Activated CD4-positive, alpha-beta T cell treated with anti-CD3 and anti-CD28 coated beads for 36 hours (primary cell): ENCODE measurements at regions of chr15 and their contacts with region 1.

Region 1: DNA sequence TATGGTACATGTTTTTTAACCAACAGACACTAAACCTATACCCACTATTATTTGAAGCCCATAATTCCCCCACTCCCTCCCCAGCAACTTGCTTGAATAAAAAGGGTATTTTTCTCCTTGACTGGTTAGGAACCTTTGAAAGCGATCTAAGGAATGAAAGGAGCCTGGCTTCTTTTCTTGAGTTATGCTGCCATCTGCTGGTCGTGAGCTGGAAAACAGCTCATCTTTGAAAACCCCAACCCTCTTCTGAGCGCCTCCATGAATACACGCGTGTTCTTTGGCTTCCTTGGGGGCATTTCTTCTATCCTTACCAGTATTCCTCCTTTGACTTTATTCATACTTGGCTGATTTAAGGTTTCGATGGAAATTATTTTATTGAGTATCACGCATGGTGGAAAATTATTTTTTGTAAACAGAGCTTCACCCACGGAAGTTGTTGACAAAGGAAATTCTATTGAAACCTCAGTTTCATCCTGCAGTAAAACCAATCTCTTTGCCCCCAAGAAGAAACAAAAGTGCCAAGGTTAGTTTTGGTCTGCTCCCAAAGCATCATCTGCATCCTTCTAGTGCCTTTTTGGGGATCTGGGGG is 171.6 kb downstream of the SV2B start:
- DNase-seq: peak; percentile 74
- ATAC-seq: peak; percentile 64
- H3K4me3 Mint-ChIP-seq: no peak overlapping the region
- H3K27ac Mint-ChIP-seq: no peak overlapping the region
- H3K4me1 Mint-ChIP-seq: peaks cover 2% of the 10 kb centered on the region
- H3K27me3 Mint-ChIP-seq: peaks cover 12% of the 10 kb centered on the region

Region 2: DNA sequence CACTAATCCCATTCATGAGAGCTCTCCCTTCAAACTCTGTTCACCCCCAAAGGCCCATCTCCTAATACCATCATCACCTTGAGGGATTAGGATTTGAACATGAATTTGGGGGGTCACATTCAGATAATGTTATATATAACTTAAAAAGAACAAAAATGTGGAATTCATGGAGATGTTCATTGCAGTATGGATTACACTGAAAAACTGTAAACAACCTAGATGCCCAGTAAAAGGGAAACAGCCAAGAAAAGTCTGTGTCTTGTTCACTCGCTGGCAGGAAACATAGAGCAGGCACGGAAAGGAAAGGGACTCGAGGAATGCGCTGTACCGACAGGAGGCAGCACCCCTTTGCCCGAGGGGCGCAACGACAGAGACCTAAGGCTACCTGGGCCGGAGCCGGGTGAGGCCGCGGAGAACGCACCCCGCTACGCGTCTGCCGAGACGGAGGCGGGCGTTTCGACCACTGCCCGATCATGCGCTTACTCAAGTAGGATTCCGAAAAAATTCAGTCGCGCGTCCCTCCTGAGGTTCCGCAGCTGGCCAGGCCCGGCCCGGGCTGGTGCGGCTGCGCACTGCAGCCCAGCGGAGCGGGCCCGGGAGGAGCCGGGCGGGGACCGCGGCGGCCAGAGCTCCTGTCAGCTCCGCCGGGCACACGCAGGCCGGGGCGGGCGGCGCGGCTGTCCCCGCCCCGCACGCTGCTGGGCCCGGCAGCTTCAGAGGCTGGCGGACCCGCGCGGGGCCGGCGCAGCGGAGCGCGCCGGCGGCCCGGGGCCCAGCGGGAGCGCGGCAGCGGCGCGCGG is 369.4 kb before region 1 on chr15:
- CTCF ChIA-PET with region 1: no interaction called
- POLR2A ChIA-PET with region 1: no interaction called
- intact Hi-C with region 1: loop called in 1 of 2 experiments (anchors 2 kb)
- DNase-seq: peak; percentile 83
- ATAC-seq: peak; percentile 79
- H3K4me3 Mint-ChIP-seq: peak overlapping the region; percentile 81
- H3K27ac Mint-ChIP-seq: peak overlapping the region; percentile 88
- H3K4me1 Mint-ChIP-seq: peaks cover 16% of the 10 kb centered on the region
- H3K27me3 Mint-ChIP-seq: no peaks in the 10 kb centered on the region

Region 3: DNA sequence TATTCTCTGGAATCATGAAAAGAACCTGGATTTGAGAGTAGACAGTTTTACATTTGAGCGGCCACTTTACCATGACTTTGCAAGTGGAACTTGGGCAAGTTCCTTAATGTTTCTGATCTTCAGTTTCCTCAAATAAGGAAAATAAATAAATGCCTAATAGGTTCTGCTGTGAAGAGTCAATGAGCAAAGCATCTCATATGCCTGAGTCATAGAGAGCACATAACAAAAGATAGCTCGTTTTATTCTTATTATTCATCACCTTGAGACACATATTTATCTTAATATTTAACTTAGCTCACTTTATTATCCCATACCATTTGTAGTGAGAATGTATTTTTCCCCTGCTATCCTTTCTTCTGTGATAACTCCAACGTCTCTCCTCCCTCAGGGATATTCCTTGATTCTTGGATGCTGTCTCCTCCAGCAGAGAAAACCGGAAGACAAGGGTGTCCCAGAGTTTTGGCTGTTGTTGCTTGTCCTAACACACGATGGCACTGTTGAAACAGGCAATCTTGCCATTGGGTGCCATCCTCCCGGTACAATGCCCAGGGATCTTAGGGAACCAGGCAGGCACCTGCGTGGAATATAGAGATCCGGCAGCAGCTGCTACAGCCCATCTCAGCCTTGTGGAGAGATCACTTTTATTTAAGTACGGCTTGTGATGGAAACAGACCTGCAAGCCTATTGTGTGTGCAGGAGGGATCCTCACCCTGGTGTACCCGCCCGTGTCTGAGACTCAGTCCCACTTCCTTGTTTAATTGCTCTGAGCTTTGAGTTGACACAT is 215.9 kb before region 1 on chr15:
- CTCF ChIA-PET with region 1: interaction called, 91 read pairs
- POLR2A ChIA-PET with region 1: interaction called, 3 read pairs
- intact Hi-C with region 1: loop called (anchors 1 kb)
- DNase-seq: peak; percentile 61
- ATAC-seq: peak; percentile 42
- H3K4me3 Mint-ChIP-seq: no peak overlapping the region
- H3K27ac Mint-ChIP-seq: no peak overlapping the region
- H3K4me1 Mint-ChIP-seq: no peaks in the 10 kb centered on the region
- H3K27me3 Mint-ChIP-seq: peaks cover 44% of the 10 kb centered on the region

Region 4: GRCh38 chr15:91249591-91249990 is 22.1 kb before region 1 on chr15:
- CTCF ChIA-PET with region 1: interaction called, 18 read pairs
- POLR2A ChIA-PET with region 1: no interaction called
- intact Hi-C with region 1: no loop called
- DNase-seq: no peak
- ATAC-seq: no peak
- H3K4me3 Mint-ChIP-seq: no peak overlapping the region
- H3K27ac Mint-ChIP-seq: no peak overlapping the region
- H3K4me1 Mint-ChIP-seq: no peaks in the 10 kb centered on the region
- H3K27me3 Mint-ChIP-seq: peaks cover 13% of the 10 kb centered on the region

Region 5: GRCh38 chr15:91258425-91258779 is 13.3 kb before region 1 on chr15:
- CTCF ChIA-PET with region 1: interaction called, 16 read pairs
- POLR2A ChIA-PET with region 1: no interaction called
- intact Hi-C with region 1: no loop called
- DNase-seq: peak; percentile 18
- ATAC-seq: peak; percentile 61
- H3K4me3 Mint-ChIP-seq: no peak overlapping the region
- H3K27ac Mint-ChIP-seq: no peak overlapping the region
- H3K4me1 Mint-ChIP-seq: no peaks in the 10 kb centered on the region
- H3K27me3 Mint-ChIP-seq: peaks cover 14% of the 10 kb centered on the region